OCI-LY7 (cell line): ENCODE measurements at regions of chr17 and their contacts with region 1.

Region 1: GRCh38 chr17:68035523-68036303 is at the start of gene KPNA2:
- DNase-seq: peak; percentile 100
- H3K4me3 ChIP-seq: peak within 1 kb of the TSS; percentile 89
- H3K27ac ChIP-seq: peak within 1 kb of the TSS; percentile 78
- H3K4me1 ChIP-seq: peaks cover 22% of the 10 kb centered on the region
- CTCF ChIP-seq: no peak
- total RNA-seq, gene KPNA2: 253 and 397 TPM in 2 replicates

Region 2: DNA sequence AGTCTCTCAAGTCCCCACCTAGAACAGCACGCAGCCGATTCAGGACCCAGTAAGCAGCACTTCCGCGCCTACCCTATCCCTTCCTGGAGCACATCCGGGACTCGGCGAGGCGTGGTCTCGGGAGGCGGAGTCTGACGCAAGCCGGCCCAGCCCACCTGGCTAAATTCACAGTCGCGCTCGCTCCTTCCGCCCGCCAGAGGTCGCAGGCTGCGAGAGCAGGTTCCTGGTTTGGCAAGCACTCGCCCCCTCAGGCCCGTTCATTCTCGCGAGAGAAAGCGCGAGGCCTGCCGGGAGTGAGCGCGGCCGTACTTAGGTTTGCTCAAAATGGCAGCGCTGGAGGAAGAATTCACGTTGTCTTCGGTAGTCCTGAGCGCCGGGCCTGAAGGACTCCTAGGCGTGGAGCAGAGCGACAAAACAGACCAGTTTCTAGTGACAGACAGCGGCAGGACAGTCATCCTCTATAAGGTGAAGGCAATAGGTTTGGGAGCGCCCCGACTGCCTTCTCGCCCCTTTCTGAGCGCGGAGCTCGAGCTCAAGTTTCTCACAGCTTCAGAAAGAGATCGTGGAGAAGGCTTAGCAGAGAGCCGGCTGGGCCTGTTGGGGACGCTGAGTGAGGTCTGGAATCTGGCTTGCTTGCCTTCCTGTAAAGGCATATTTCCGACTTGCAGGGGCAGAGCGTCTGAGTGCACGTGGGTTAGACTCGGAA is 317.9 kb before region 1 on chr17 and contains the start of gene NOL11:
- CTCF ChIA-PET with region 1: no interaction called
- POLR2A ChIA-PET with region 1: no interaction called
- intact Hi-C with region 1: loop called (anchors 5 kb)
- DNase-seq: peak; percentile 99
- H3K4me3 ChIP-seq: peak within 1 kb of the TSS; percentile 84
- H3K27ac ChIP-seq: peak within 1 kb of the TSS; percentile 78
- H3K4me1 ChIP-seq: peaks cover 27% of the 10 kb centered on the region
- CTCF ChIP-seq: peak; percentile 91
- total RNA-seq, gene NOL11: 49.4 and 65.5 TPM in 2 replicates

Region 3: GRCh38 chr17:68019675-68020408 is 15.9 kb before region 1 on chr17:
- CTCF ChIA-PET with region 1: interaction called, 5 read pairs
- POLR2A ChIA-PET with region 1: interaction called, 10 read pairs
- intact Hi-C with region 1: loop called (anchors 1 kb)
- DNase-seq: peak; percentile 99
- H3K4me3 ChIP-seq: peak overlapping the region; percentile 72
- H3K27ac ChIP-seq: peak overlapping the region; percentile 46
- H3K4me1 ChIP-seq: peaks cover 16% of the 10 kb centered on the region
- CTCF ChIP-seq: peak; percentile 68

Region 4: DNA sequence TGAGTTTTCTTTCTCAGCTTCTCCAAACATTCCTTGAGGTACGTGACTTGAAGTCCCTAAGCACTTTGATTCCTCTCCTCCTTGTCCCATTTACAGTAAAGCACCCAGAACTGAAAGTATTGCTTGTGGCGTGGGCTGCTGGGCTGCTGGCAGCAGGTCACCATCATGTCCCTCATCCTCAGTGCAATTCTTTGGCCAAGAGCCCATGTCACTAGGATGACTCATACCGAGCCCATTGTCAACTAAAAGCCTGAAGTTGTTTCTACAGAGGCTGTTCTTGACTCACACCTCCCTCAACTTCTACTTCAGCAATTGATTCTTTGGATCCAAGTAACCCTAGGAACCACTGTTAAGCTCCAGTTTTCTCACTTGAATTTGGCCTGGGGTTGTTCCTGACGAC is 54.2 kb after region 1 on chr17:
- CTCF ChIA-PET with region 1: interaction called, 10 read pairs
- POLR2A ChIA-PET with region 1: interaction called, 6 read pairs
- intact Hi-C with region 1: no loop called
- DNase-seq: no peak
- H3K4me3 ChIP-seq: no peak overlapping the region
- H3K27ac ChIP-seq: no peak overlapping the region
- H3K4me1 ChIP-seq: peaks cover 46% of the 10 kb centered on the region
- CTCF ChIP-seq: no peak; the same call in 1 of the 2 replicates

Region 5: GRCh38 chr17:68179236-68179925 is 143.7 kb after region 1 on chr17:
- CTCF ChIA-PET with region 1: no interaction called
- POLR2A ChIA-PET with region 1: interaction called, 13 read pairs
- intact Hi-C with region 1: no loop called
- DNase-seq: no peak
- H3K4me3 ChIP-seq: no peak overlapping the region
- H3K27ac ChIP-seq: no peak overlapping the region
- H3K4me1 ChIP-seq: peaks cover 3% of the 10 kb centered on the region
- CTCF ChIP-seq: no peak

Region 6: GRCh38 chr17:68512247-68512982 is 476.7 kb after region 1 on chr17 and contains the start of gene PRKAR1A:
- CTCF ChIA-PET with region 1: no interaction called
- POLR2A ChIA-PET with region 1: no interaction called
- intact Hi-C with region 1: loop called (anchors 5 kb)
- DNase-seq: peak; percentile 98
- H3K4me3 ChIP-seq: peak within 1 kb of the TSS; percentile 90
- H3K27ac ChIP-seq: peak within 1 kb of the TSS; percentile 65
- H3K4me1 ChIP-seq: peaks cover 48% of the 10 kb centered on the region
- CTCF ChIP-seq: no peak
- total RNA-seq, gene PRKAR1A: 158 and 228 TPM in 2 replicates